Activated CD4-positive, alpha-beta T cell treated with anti-CD3 and anti-CD28 coated beads, Interleukin-2, amount 10 ng/mL, durations not matched to agents 24 days and 14 days (primary cell): ENCODE measurements at regions of chr4 and their contacts with region 1.

Region 1: DNA sequence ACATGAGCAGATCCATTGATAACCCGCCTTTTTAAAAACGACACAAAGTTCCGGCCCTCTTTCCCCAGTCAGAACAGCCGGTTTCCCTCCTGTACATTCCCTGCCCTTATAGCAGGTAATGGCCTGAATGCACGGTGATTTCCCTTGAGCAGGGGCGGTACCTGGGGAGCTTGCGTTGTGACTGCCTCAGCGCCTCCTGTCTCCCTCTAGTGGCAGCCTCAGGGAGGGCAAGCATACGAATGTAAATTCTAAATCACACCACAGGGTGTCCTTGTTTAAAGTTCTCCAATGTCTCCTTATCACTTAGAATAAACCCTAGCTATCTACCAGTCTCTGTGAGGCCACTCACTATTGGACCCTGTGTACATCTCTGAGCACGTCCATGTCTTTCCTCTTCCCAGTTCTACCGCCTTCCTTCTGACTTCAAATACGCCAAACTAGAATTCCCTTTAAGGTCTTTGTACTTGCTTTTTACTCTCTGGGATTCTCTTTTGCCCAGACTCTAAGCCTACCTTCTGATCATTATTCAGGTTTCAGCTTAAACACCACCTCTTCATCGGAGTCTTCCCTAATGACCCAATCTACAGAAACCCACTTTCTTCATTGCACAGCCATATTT is 18.4 kb upstream of the LDB2 start:
- DNase-seq: peak; percentile 94
- H3K4me3 Mint-ChIP-seq: no peak overlapping the region
- H3K27ac Mint-ChIP-seq: no peak overlapping the region
- H3K4me1 Mint-ChIP-seq: peaks cover 3% of the 10 kb centered on the region
- H3K27me3 Mint-ChIP-seq: peaks cover 3% of the 10 kb centered on the region

Region 2: GRCh38 chr4:16505726-16506125 is 411.1 kb before region 1 on chr4:
- intact Hi-C with region 1: no loop called
- DNase-seq: no peak
- H3K4me3 Mint-ChIP-seq: no peak overlapping the region
- H3K27ac Mint-ChIP-seq: no peak overlapping the region
- H3K4me1 Mint-ChIP-seq: no peaks in the 10 kb centered on the region
- H3K27me3 Mint-ChIP-seq: no peaks in the 10 kb centered on the region

Region 3: DNA sequence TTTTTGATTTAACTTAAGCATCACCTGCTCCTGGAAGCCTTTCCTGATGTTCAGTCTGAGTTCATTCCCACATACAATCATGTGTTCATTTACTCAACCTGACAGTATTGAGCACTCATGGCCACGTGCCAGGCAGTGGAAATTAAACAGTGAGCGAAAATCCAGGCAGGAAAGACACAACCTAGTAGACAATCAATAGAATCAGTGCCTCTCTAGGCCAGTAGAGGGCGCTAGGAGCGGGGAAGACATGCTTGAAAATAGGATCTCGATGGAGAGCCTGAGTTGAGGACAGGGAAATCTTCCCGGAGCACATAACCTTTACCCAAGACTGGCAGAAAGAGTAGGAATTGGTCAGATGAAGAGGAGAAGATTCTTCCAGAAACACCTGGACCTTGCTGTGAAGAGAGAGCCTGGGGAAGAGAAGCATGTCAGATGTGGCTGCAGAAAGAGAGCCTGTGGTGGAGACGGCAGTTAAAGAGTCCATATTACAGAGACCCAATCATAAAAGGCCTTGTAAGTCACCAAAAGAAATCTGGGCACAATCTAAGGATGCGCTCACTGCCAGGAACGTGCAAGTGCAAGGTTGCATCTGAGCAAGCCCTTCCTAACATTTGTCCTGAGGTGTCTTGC is 121.9 kb before region 1 on chr4:
- intact Hi-C with region 1: loop called (anchors 1 kb)
- DNase-seq: peak; percentile 82
- H3K4me3 Mint-ChIP-seq: no peak overlapping the region
- H3K27ac Mint-ChIP-seq: no peak overlapping the region
- H3K4me1 Mint-ChIP-seq: no peaks in the 10 kb centered on the region
- H3K27me3 Mint-ChIP-seq: no peaks in the 10 kb centered on the region

Region 4: GRCh38 chr4:17260166-17260907 is 343.5 kb after region 1 on chr4:
- intact Hi-C with region 1: no loop called
- DNase-seq: no peak
- H3K4me3 Mint-ChIP-seq: no peak overlapping the region
- H3K27ac Mint-ChIP-seq: no peak overlapping the region
- H3K4me1 Mint-ChIP-seq: peaks cover 5% of the 10 kb centered on the region
- H3K27me3 Mint-ChIP-seq: peaks cover 4% of the 10 kb centered on the region

Region 5: GRCh38 chr4:17324386-17324830 is 407.6 kb after region 1 on chr4:
- intact Hi-C with region 1: loop called (anchors 1 kb)
- DNase-seq: peak; percentile 84
- H3K4me3 Mint-ChIP-seq: peak overlapping the region; percentile 39
- H3K27ac Mint-ChIP-seq: peak overlapping the region; percentile 48
- H3K4me1 Mint-ChIP-seq: peaks cover 20% of the 10 kb centered on the region
- H3K27me3 Mint-ChIP-seq: no peaks in the 10 kb centered on the region